ENCODE measurements at regions of chr19 and their contacts with region 1.

Region 1: DNA sequence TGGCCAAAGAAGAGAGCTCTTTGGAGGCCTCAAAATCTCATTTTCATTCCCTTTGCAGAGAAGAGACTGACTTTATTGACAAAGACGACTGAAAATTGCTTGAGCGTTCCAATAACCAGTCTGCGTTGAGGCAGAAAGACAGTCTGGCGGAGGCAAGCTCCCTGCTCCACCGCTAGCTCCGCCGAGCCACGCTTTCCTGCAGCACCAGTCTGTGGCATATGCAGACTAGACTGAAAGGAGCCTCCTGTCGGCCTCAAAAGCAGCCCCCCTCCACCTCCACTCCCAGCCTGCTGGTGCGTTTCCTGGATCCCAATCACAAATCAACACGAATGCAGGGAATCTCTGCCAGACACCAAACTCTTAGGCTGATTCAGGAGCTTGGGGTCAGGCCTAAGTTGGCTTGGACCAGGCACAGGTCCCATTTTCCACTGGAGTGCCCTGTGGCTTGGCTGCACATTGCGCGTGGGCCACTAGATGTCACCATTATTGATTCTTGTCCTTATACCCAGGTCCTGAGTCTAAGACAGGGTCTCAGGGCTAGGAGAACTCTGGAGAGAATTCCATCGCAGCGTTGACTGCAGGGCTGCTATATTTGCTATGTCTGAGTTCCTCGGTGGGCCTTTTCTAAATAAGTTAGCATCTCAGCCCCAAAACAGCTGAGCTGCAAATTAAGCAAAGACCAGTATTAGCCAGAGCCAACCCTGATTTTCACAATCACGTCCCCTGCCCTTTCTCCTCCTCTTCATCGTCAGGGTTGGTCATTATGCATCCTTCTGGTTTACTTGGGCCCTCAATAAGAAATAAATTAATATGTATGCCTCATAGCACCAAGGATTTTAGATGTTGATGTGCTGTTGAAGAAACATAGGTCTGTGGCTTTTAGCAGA is 5.2 kb upstream of the ZNF507 start:
- DNase-seq: peak in 1 of 2 donors; percentile 87
- H3K4me3 ChIP-seq: no peak overlapping the region
- H3K27ac ChIP-seq: peak overlapping the region; percentile 2 to 29
- H3K4me1 ChIP-seq: peaks cover 0 to 6% of the 10 kb centered on the region in 2 donors
- H3K27me3 ChIP-seq: no peaks in the 10 kb centered on the region
- CTCF ChIP-seq: peak; percentile 52 to 86 (median 71)

Region 2: DNA sequence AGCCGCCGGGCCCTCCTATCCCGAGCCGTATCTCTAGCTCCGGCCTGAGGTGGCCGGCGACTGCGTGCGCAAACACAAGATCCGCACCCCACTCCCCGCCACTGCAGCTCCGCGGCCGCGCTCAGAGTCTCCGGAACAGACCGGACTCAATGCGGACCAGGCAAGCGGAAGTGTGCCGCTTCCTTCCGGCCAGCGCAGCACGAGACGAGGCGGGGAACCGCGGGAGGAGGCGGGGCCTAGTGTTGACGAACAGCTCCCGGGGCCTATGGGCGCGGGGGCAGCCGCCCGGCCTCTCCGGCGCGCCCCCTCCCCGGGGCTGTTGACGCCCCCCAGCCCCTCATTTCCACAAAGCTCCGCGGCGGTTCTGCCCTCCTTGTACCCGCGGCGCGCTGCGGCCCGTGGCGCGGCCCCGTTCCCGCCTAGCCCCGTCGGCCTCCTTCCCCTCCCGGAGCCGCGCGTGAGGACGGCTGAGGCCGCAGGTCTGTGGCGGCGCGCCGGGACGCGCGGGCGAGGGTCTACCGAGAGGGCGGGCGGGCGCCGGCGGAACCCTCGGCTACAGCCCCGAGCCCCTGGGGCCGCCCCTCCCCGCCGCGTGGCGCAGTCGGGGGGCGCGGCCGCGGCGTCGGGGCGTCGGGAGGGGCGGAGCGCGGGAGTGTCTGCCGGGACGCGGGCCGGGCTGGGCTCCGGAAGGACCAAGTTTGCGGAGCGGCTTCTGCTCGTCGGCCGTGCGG is 65.4 kb after region 1 on chr19 and contains the start of gene DPY19L3:
- intact Hi-C with region 1: loop called (anchors 1 kb)
- DNase-seq: peak; percentile 81 to 97
- H3K4me3 ChIP-seq: peak within 1 kb of the TSS; percentile 93 to 94
- H3K27ac ChIP-seq: peak within 1 kb of the TSS; percentile 99 to 100
- H3K4me1 ChIP-seq: peaks cover 0 to 14% of the 10 kb centered on the region in 2 donors
- H3K27me3 ChIP-seq: no peaks in the 10 kb centered on the region
- CTCF ChIP-seq: no peak
- total RNA-seq, gene DPY19L3: 115 TPM

Region 3: GRCh38 chr19:32464279-32464678 is 124.0 kb after region 1 on chr19:
- intact Hi-C with region 1: loop called (anchors 10 kb)
- DNase-seq: no peak
- H3K4me3 ChIP-seq: no peak overlapping the region
- H3K27ac ChIP-seq: no peak overlapping the region
- H3K4me1 ChIP-seq: no peaks in the 10 kb centered on the region
- H3K27me3 ChIP-seq: no peaks in the 10 kb centered on the region
- CTCF ChIP-seq: peak in 1 of 3 experiments; percentile 17